Heart right ventricle (tissue), 16 donors: ENCODE measurements at regions of chr6 and their contacts with region 1.

Region 1: DNA sequence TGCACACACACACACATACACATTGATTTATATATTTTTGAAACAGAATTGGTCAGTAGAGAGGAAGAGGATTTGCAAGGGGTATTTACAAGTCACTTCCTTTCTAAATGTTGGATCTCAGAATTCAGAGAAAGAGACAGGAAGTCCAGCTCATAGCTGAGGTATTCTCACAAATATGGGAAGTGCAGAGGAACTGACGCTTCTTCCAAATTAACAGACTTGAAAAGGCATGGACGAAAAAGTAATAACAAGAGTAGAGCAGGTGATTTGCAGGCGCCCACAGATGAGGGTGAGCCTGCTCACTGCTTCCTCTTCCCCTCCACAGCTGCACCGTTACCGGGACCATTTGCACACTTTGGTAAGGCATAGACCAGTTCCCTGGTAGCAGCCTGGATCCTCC is 246.4 kb downstream of the PHACTR1 start:
- DNase-seq: no peak
- ATAC-seq: peak in 7 of 8 donors; percentile 26 to 65 (median 43)
- H3K4me3 ChIP-seq: peak overlapping the region in 9 of 10 donors; percentile 4 to 30 (median 23)
- H3K27ac ChIP-seq: peak overlapping the region; percentile 38 to 91 (median 78)
- H3K4me1 ChIP-seq: peaks cover 0 to 53% (median 37%) of the 10 kb centered on the region in 9 donors
- H3K27me3 ChIP-seq: no peaks in the 10 kb centered on the region
- CTCF ChIP-seq: no peak

Region 2: DNA sequence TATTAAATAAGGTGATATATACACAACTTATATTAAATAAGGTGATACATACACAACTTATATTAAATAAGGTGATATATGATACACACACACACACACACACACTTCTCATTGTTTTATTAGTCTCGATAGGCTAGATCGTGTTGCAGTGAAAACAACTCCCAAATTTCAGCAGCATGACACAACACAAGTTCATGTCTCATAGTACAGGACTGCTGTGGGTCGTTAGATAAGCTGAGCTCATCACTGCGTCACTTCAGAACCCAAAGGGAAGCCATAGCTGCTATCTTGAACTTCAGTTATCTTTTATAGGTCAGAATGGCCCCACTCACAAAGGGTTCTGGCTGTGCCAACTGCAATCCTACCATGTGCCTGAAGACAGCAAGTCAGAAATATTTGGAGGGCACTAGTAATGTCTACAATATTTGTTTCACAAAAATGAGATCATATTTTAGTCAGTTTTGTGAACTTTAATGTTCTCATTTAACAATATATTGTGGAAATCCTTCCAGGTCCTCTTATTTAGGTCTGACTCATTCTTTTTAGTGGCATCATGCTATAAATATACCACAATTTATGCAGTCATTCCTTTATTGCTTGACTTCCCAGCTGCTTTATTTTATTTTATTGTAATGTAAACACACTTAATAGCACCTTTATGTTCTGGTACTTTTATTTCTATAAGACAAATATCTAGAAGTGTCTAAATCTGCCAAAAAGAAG is 43.8 kb after region 1 on chr6:
- intact Hi-C with region 1: loop called in 5 of 10 experiments (anchors 5 kb)
- DNase-seq: no peak
- ATAC-seq: peak in 7 of 8 donors; percentile 34 to 95 (median 91)
- H3K4me3 ChIP-seq: no peak overlapping the region
- H3K27ac ChIP-seq: peak overlapping the region; percentile 17 to 81 (median 54)
- H3K4me1 ChIP-seq: peaks cover 0 to 39% (median 21%) of the 10 kb centered on the region in 9 donors
- H3K27me3 ChIP-seq: no peaks in the 10 kb centered on the region
- CTCF ChIP-seq: no peak